Left lung (tissue), 14 donors: ENCODE measurements at regions of chr17 and their contacts with region 1.

Region 1: DNA sequence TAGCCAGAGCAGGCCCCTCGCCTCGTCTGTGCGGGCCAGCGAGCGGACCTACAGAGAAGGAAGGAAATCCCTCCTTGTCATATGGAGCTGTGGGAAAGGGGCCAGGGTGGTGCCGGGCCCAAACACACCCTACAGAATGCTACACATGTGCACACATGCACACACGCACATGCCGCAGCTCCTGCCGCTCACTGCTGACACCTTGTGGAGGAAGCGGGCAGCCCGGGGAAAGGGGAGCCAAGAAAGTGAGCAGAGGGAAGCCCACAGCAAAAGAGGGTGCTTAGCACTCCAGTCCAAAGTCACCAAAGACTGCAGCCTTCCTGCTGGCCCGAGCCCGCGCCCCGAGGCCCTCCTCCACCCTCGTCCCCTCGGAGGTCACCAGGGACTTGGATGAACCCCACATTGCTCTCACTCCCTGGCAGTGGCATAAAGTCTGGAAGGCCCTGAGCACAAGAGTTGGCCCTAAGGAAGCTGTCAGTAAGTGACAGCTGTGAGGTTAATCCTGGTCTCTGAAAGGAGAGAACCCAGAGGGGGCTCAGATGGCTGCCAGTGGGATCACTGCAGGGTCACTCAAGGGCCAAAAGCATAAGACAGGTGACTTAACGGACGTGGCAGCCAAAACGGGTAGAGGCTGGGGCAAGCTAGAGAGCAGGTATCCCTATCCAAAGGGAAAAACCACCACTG is 68.2 kb downstream of the MYO18A start:
- DNase-seq: peak; percentile 51 to 92 (median 67)
- ATAC-seq: peak; percentile 58
- H3K4me3 ChIP-seq: no peak overlapping the region
- H3K27ac ChIP-seq: no peak overlapping the region
- H3K4me1 ChIP-seq: peaks cover 4 to 43% of the 10 kb centered on the region in 2 donors
- H3K27me3 ChIP-seq: no peaks in the 10 kb centered on the region
- CTCF ChIP-seq: peak; percentile 84 to 92

Region 2: DNA sequence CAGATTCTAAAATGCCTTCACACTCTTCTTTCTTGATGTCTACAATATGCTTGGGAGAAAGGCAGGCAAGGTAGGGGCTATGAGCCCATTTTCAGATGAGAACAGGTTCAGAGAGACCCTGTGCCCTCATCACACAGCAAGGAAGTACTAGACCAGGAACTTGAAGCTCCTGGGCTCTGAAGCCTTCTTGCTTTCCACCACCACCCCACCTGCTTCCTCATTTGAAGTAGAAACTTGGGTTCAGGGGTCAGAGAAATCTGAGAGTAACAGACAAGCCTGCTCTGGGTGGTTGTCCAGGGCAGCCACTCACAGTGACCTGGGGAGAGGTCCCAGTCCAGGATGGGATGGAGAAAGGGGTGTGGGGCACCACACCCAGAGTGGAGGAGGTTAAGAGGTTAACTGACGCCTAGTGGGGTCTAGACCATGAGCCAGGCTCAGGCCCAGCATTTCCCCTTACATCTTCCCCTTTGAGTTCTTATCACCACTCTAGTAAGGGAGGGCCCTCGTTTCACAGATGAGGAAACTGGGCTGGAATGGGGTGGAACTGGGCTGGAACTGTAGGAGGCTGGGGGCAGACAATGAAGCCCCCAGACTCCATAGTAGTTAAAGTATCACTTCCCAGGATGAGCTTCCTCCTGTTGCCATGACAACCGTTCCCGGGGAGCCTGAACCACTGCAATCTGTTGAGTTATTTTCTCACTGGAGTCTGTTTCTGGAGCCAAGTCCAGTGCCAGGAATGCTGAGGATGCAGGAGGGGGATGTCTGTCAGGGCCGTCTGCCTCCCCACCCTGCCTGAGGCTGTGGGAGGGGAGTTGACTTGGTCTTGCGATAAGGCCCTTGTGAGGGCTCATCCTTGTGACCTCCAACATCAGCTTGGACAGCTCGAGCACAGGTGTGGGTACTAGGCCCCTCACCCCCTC is 144.5 kb before region 1 on chr17:
- intact Hi-C with region 1: loop called (anchors 5 to 10 kb)
- DNase-seq: no peak
- ATAC-seq: no peak
- H3K4me3 ChIP-seq: no peak overlapping the region
- H3K27ac ChIP-seq: peak overlapping the region in 1 of 2 donors; percentile 83
- H3K4me1 ChIP-seq: peaks cover 0 to 21% of the 10 kb centered on the region in 2 donors
- H3K27me3 ChIP-seq: peaks cover 0 to 22% of the 10 kb centered on the region in 2 donors
- CTCF ChIP-seq: no peak

Region 3: GRCh38 chr17:28973425-28973824 is 138.5 kb before region 1 on chr17:
- intact Hi-C with region 1: loop called (anchors 5 to 10 kb)
- DNase-seq: peak in 3 of 4 donors; percentile 41 to 79 (median 62)
- ATAC-seq: peak; percentile 83
- H3K4me3 ChIP-seq: no peak overlapping the region
- H3K27ac ChIP-seq: no peak overlapping the region
- H3K4me1 ChIP-seq: peaks cover 5% of the 10 kb centered on the region in 2 donors
- H3K27me3 ChIP-seq: no peaks in the 10 kb centered on the region
- CTCF ChIP-seq: no peak

Region 4: DNA sequence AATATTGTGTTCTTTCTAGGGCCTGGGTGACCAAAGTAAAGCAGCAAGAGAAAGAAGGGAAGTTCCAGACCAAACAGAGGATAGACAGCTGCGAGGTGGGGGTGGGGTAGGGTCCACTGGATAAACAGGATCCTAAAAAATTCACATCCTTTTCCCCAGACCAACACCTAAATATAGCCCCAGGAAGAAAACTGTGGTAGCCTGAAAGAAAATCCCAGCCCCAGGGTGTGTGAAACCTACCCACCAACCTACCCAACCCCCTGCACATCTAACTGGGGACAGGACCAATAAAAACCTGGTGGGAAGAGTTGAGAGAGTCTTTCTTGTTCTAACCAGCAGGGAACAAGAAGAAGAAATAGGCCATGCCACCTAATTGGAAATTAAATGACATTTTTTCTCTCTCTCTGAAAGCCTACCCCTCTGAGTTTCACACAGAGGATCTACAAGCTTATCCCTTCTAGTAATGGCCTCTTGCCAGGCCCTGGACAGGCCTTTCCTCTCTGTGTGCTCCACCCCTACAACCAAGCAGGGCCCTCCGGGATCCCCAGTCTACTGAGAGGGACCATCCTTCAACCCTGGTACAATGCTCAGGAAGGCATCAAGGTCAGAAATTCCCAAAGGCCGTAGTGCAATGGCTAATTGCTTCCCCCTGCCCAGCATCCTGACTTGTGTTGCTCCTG is 56.3 kb after region 1 on chr17:
- intact Hi-C with region 1: no loop called
- DNase-seq: no peak
- ATAC-seq: no peak
- H3K4me3 ChIP-seq: no peak overlapping the region
- H3K27ac ChIP-seq: no peak overlapping the region
- H3K4me1 ChIP-seq: peaks cover 4 to 10% of the 10 kb centered on the region in 2 donors
- H3K27me3 ChIP-seq: no peaks in the 10 kb centered on the region
- CTCF ChIP-seq: no peak

Region 5: DNA sequence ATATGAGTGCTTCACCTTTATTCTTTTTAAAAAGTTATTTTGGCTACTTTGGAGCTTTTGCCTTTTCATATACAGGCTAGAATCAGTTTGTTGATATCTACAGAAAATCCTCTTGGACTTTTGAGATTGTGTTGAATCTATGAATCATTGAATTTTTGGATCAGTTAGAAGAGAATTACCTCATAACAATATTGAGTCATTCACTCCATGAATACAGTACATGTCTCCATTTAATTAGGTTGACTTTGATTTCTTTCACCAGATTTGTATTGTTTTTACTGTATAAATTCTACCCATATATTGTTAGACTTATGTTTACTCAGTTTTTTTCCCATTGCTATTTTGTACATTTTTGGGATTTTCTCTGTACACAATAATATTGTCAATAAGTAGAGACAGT is 332.6 kb after region 1 on chr17:
- intact Hi-C with region 1: no loop called
- DNase-seq: no peak
- ATAC-seq: peak; percentile 41
- H3K4me3 ChIP-seq: no peak overlapping the region
- H3K27ac ChIP-seq: no peak overlapping the region
- H3K4me1 ChIP-seq: peaks cover 0 to 16% of the 10 kb centered on the region in 2 donors
- H3K27me3 ChIP-seq: no peaks in the 10 kb centered on the region
- CTCF ChIP-seq: no peak